ENCODE measurements at regions of chr11 and their contacts with region 1.

Region 1: GRCh38 chr11:111200010-111200534 is 45.5 kb upstream of the POU2AF2 start:
- DNase-seq: no peak
- ATAC-seq: no peak
- H3K4me3 Mint-ChIP-seq: no peak overlapping the region
- H3K27ac Mint-ChIP-seq: no peak overlapping the region
- H3K4me1 Mint-ChIP-seq: peaks cover 13% of the 10 kb centered on the region
- H3K27me3 Mint-ChIP-seq: no peaks in the 10 kb centered on the region
- CTCF ChIP-seq: no peak

Region 2: GRCh38 chr11:111185266-111185665 is 14.8 kb before region 1 on chr11:
- CTCF ChIA-PET with region 1: no interaction called
- POLR2A ChIA-PET with region 1: no interaction called
- intact Hi-C with region 1: loop called (anchors 2 kb)
- DNase-seq: no peak
- ATAC-seq: no peak
- H3K4me3 Mint-ChIP-seq: peak overlapping the region; percentile 55
- H3K27ac Mint-ChIP-seq: peak overlapping the region; percentile 86
- H3K4me1 Mint-ChIP-seq: peaks cover 75% of the 10 kb centered on the region
- H3K27me3 Mint-ChIP-seq: no peaks in the 10 kb centered on the region
- CTCF ChIP-seq: no peak

Region 3: DNA sequence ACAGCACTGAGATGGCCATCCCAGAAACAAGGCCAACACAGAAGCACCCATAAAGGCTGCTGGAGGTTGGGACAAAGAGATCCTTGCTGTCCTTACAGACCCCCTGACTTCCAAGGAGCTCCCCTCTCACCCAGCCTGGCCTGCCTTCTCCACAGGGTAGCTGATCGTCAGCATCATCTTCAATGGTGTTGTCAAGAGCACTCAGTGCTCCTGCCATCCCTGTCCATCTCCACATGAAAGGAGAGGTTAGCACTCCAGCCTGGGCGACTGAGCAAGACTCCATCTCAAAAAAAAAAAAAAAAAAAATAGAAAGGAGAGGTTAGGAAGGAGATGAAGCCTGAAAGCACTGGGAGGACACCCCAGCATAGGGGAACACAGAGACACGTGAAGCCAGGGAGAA is 96.1 kb after region 1 on chr11:
- CTCF ChIA-PET with region 1: no interaction called
- POLR2A ChIA-PET with region 1: no interaction called
- intact Hi-C with region 1: no loop called
- DNase-seq: no peak
- ATAC-seq: no peak
- H3K4me3 Mint-ChIP-seq: no peak overlapping the region
- H3K27ac Mint-ChIP-seq: no peak overlapping the region
- H3K4me1 Mint-ChIP-seq: peaks cover 23% of the 10 kb centered on the region
- H3K27me3 Mint-ChIP-seq: peaks cover 11% of the 10 kb centered on the region
- CTCF ChIP-seq: no peak